GM13977 (cell line): ENCODE measurements at regions of chr1 and their contacts with region 1.

Region 1: GRCh38 chr1:192516776-192517297 is 58.7 kb upstream of the RGS1 start:
- DNase-seq: peak; percentile 56
- CTCF ChIP-seq: no peak

Region 2: GRCh38 chr1:192171123-192171522 is 345.7 kb before region 1 on chr1:
- in situ Hi-C with region 1: no loop called
- DNase-seq: no peak
- CTCF ChIP-seq: no peak

Region 3: GRCh38 chr1:192327997-192328396 is 188.8 kb before region 1 on chr1:
- in situ Hi-C with region 1: no loop called
- DNase-seq: no peak
- CTCF ChIP-seq: no peak

Region 4: GRCh38 chr1:192580351-192580962 is 63.6 kb after region 1 on chr1:
- in situ Hi-C with region 1: loop called (anchors 10 kb)
- DNase-seq: no peak
- CTCF ChIP-seq: peak; percentile 66